ENCODE measurements at regions of chr9 and their contacts with region 1.

Region 1: DNA sequence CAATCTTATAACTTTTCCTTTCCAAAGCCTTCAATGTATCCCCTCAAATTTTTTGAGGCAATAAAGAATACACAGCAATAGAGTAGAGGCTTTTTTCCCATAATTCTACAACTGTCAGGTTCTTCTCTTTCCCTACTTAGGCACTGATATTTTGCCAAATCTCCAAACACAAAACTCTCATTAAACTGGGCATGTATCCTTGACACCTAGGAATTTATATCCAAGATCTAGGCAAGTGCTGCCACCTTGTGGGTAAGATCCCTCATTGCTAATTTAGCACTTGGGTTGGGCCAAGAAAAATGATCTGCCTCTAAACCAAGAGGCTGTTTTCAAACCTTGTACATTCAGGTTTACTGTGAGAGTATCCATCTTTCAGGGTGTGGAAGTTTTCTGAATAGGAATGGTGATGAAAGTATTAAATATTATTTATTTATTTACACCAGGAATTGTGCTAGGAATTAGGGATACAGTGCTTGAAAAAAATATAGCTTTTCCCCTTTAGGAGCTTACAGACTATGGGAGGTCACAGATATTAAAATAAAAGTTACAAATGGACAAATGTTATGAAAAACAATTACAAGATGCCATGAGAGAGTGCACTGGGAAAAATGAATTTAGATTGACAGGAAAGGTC is 17.6 kb downstream of the TSTD2 start:
- DNase-seq: peak; percentile 75
- ATAC-seq: no peak
- H3K4me3 Mint-ChIP-seq: no peak overlapping the region
- H3K27ac Mint-ChIP-seq: no peak overlapping the region
- H3K4me1 Mint-ChIP-seq: peaks cover 11% of the 10 kb centered on the region
- H3K27me3 Mint-ChIP-seq: no peaks in the 10 kb centered on the region

Region 2: DNA sequence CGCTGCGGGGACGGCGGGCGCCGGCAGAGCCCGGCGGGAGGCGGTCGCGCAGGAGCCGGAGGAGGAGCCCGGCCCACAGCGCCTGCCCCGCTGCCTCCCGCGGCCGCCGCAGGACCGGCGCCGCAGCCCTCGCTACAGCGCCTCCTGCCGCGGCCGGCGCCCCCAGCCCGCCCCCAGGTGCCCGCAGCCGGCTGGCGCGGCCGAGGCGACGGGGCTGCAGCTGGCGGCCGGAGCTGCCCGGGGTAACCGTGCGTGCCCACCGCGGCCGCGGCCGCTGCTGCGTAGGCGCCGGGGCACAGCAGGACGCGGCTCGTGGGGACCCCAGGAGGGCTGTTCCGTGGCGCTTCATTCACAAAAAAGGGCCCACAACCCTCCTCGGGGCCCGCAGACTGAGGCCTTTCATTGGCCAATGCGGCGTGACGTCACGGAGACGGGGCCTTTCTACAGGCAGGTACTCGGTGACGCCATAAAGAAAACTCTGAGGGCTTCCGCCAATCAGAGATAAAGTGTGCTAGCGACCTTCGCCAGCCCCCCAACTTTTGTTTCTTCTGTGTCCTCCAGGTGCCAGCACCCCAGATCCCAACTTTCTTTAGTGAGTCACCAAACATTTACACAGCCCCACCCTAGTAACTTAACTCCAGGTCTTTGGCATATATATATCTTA is 995.9 kb before region 1 on chr9 and contains the start of gene CDC14B:
- CTCF ChIA-PET with region 1: no interaction called
- POLR2A ChIA-PET with region 1: no interaction called
- DNase-seq: peak; percentile 66
- ATAC-seq: peak; percentile 90
- H3K4me3 Mint-ChIP-seq: peak within 1 kb of the TSS; percentile 46
- H3K27ac Mint-ChIP-seq: no peak within 1 kb of the TSS
- H3K4me1 Mint-ChIP-seq: peaks cover 8% of the 10 kb centered on the region
- H3K27me3 Mint-ChIP-seq: peaks cover 45% of the 10 kb centered on the region
- total RNA-seq, gene CDC14B: 0.23 to 0.37 TPM

Region 3: DNA sequence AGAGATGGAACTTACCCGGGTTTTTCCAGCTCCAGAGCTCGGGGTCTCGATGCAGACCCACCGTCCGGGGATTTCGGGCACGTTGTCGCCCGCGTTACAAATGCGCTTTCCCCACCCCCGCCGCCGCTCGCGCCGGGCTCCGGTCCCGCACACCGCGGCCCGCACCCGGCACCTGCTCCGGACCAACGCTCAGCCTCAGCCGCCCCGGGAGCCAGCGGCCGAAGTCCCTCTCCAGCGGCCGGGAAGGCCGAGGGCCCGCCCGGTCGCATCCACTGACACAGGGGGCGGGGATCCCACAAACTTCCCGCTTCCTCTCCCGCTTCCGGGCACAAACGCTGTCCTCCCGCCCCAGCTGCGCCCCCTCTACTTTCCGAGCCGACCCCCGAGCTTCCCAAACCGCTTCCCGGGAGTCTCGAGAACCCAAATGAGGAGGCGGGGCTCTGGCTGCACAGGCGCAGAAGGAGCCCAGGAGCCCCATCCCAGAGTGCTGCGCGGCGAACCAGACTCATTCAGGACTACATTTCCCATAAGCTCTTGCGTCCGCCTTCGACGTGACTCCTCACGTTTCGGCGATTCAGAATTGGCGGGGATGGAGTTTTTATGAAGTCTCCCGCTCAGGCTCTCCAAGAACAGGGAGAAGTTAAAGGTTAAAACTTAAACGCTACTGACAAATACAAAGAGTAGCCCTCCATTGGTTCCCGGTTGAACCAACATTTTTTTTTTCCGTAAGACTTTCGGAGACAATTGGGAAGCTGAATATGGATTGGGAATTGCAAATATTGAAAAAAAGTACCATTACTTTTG is 761.3 kb before region 1 on chr9 and contains the start of gene ZNF782:
- CTCF ChIA-PET with region 1: interaction called, 10 read pairs
- POLR2A ChIA-PET with region 1: no interaction called
- DNase-seq: peak; percentile 90
- ATAC-seq: peak; percentile 95
- H3K4me3 Mint-ChIP-seq: peak within 1 kb of the TSS; percentile 100
- H3K27ac Mint-ChIP-seq: peak within 1 kb of the TSS; percentile 98
- H3K4me1 Mint-ChIP-seq: peaks cover 27% of the 10 kb centered on the region
- H3K27me3 Mint-ChIP-seq: peaks cover 16% of the 10 kb centered on the region
- total RNA-seq, gene ZNF782: 3.9 to 4.3 TPM

Region 4: DNA sequence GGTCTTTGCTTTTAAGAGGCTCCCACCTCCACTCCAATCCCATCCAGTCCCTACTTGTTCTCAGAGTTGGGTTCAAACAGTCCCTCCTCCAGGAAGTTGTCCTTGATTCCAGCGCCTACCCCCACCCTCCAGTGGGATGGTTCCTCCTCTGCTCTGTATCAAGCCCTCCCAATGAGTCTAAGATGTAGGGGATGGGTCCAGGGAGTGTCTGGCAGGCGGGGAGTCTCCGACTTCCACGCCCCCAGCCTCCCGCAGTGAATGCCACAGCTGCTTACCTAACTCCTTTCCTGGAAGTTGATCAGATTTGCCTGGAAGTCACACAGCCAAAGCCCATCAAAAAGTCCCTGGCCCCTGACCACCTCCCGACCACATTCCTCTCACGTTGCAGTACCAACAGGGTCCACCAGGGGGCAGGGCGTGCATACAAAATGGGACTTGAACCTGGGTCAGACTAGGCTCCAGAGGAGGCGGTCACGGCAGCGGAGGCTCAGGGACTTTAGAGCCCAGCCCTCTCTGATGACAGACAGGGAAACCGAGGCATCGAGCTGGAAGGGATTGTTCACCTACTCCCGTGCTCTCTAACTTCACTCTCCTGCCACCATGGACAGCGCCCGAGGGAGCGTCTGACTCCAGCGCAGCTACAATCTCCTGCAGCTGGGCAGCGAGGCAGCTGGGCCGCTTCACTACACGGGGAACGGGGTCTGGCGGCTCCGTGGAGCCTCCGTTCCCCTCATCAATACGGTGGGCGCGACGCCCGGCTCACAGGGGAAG is 228.6 kb before region 1 on chr9:
- CTCF ChIA-PET with region 1: interaction called, 33 read pairs
- POLR2A ChIA-PET with region 1: no interaction called
- DNase-seq: peak; percentile 80
- ATAC-seq: peak; percentile 77
- H3K4me3 Mint-ChIP-seq: no peak overlapping the region
- H3K27ac Mint-ChIP-seq: peak overlapping the region; percentile 52
- H3K4me1 Mint-ChIP-seq: peaks cover 21% of the 10 kb centered on the region
- H3K27me3 Mint-ChIP-seq: peaks cover 23% of the 10 kb centered on the region

Region 5: DNA sequence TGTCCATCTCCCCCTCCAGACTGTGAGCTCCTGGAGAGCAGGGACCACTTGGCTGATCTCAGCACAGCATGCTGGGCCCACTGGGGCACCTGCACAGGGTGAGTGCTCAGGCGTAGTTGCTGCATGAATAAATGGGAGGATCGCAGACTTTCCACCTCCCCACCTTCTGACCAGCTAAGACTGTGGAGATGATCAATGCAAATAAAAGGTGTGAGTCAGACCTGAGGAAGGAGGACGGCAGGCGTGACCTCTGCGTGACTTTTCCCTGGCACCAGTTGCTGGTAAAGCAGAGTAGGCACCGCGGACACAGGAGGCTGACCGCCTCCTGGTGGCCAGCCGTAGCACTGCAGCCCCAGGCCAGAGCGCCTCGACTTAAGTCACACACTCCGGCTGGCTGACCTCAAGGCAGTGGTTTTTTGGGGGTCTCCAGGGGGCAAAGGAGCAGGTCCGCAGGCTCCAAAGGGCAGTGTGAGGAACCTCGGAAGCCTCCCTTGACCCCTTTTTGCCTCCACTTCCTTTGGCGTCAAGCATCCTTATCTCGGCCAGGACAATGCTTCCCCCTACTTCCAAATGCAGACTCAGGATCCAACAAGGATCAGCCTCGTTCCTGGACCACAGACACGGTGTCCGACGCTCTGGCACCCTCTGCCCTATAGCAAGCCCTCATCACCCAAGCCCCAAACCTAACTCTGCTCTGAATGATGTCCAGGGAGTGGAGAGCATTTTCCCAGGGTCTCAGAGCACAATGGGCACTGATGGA is 216.4 kb before region 1 on chr9:
- CTCF ChIA-PET with region 1: interaction called, 10 read pairs
- POLR2A ChIA-PET with region 1: no interaction called
- DNase-seq: peak; percentile 65
- ATAC-seq: peak; percentile 45
- H3K4me3 Mint-ChIP-seq: no peak overlapping the region
- H3K27ac Mint-ChIP-seq: no peak overlapping the region
- H3K4me1 Mint-ChIP-seq: peaks cover 27% of the 10 kb centered on the region
- H3K27me3 Mint-ChIP-seq: peaks cover 41% of the 10 kb centered on the region

Region 6: GRCh38 chr9:97411789-97412625 is 203.5 kb before region 1 on chr9 and contains the start of gene TDRD7:
- CTCF ChIA-PET with region 1: interaction called, 27 read pairs
- POLR2A ChIA-PET with region 1: no interaction called
- DNase-seq: peak; percentile 88
- ATAC-seq: peak; percentile 87
- H3K4me3 Mint-ChIP-seq: peak within 1 kb of the TSS; percentile 82
- H3K27ac Mint-ChIP-seq: peak within 1 kb of the TSS; percentile 74
- H3K4me1 Mint-ChIP-seq: peaks cover 28% of the 10 kb centered on the region
- H3K27me3 Mint-ChIP-seq: peaks cover 25% of the 10 kb centered on the region
- total RNA-seq, gene TDRD7: 9.3 to 9.6 TPM

Region 7: DNA sequence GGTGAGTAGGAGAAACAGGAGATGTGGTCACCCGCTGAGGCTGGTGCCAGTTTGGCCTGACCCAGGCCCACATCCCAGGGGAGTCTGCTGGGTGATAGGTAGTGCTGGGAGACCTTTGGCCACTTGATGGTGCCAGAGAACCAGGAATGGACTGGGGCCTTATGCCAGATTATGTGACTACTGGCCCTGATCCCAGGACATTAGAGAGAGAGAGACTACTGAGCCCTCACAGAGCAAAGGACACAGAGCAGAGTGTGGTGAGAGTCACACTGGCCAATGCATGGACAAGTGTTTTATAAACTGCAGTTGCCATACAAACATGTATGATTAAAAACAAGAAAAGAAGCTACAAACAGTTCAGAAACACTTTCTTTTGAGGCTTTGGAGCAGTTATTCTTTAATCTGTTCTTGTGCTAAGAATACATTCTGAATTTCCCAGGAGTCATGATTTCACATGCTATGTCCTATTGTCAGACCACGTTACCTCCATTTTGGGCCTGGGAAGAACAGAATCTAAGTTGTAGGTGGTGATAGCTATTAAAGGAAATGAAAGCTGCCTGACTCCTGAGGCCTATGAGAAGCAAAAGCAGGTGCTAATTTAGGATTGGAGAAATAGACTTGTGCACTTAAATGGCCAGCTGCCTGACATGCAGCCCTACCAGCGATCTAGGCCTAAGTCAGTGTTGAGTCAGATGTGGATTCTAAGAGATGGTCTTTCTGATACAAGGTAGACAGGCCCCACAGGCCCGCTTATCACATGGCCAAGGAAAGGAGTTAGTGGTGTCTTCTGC is 146.7 kb before region 1 on chr9:
- CTCF ChIA-PET with region 1: interaction called, 84 read pairs
- POLR2A ChIA-PET with region 1: no interaction called
- DNase-seq: peak; percentile 43
- ATAC-seq: peak; percentile 64
- H3K4me3 Mint-ChIP-seq: no peak overlapping the region
- H3K27ac Mint-ChIP-seq: no peak overlapping the region
- H3K4me1 Mint-ChIP-seq: no peaks in the 10 kb centered on the region
- H3K27me3 Mint-ChIP-seq: no peaks in the 10 kb centered on the region

Region 8: DNA sequence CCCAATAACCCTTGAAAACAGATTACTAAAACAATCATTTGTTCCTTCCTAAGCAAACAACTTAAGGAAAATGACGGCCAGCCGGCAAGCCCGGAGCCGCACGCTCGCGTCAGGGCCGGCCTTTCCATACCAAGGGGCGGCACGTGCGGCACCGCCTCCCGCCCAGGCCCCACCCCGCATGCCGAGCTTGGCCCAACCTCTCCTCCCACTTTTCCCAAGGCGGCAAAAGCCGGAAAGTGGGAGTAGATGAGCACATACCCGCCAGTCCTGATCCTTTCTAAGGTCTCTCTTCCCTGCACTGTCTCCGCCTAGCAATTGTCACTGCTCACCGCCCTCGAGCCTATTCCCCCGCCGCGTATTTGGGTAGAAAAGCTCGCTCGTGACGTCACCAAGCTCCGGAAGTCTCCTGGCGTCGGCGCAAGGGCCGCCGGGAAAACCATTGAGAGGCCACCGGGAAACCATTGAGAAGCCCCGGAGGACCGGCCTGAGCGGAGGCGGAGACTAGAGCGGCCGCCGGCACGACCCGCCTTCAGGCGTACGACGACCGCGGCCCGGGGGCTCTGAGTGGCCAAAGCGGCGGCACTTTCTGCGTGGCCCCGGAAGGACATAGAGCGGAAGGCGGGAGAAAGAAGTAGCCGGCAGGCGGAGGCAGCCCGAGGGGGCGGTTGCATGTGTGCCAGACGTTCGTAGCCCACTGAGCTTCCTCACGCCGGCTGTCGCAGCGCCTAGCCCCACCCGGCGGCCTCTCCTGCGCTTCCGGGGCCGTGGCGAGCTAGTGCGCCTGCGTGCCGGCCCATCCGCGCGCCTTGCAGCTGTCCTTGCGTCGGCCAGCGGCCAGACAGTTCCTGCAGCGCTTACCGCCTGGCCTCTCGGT is 17.7 kb after region 1 on chr9 and contains the starts of genes NCBP1 and TSTD2:
- CTCF ChIA-PET with region 1: interaction called, 27 read pairs
- POLR2A ChIA-PET with region 1: interaction called, 6 read pairs
- DNase-seq: peak; percentile 97
- ATAC-seq: peak; percentile 92
- H3K4me3 Mint-ChIP-seq: peak within 1 kb of the TSS; percentile 86
- H3K27ac Mint-ChIP-seq: peak within 1 kb of the TSS; percentile 100
- H3K4me1 Mint-ChIP-seq: peaks cover 29% of the 10 kb centered on the region
- H3K27me3 Mint-ChIP-seq: no peaks in the 10 kb centered on the region
- total RNA-seq, gene NCBP1: 45.1 to 45.9 TPM
- total RNA-seq, gene TSTD2: 13.0 to 15.6 TPM

Measured in activated CD8-positive, alpha-beta T cell treated with anti-CD3 and anti-CD28 coated beads, Interleukin-2, amount 10 ng/mL, durations not matched to agents 7 days and 5 days (primary cell).